Endothelial cell of umbilical vein (primary cell): ENCODE measurements at regions of chr1 and their contacts with region 1.

Region 1: DNA sequence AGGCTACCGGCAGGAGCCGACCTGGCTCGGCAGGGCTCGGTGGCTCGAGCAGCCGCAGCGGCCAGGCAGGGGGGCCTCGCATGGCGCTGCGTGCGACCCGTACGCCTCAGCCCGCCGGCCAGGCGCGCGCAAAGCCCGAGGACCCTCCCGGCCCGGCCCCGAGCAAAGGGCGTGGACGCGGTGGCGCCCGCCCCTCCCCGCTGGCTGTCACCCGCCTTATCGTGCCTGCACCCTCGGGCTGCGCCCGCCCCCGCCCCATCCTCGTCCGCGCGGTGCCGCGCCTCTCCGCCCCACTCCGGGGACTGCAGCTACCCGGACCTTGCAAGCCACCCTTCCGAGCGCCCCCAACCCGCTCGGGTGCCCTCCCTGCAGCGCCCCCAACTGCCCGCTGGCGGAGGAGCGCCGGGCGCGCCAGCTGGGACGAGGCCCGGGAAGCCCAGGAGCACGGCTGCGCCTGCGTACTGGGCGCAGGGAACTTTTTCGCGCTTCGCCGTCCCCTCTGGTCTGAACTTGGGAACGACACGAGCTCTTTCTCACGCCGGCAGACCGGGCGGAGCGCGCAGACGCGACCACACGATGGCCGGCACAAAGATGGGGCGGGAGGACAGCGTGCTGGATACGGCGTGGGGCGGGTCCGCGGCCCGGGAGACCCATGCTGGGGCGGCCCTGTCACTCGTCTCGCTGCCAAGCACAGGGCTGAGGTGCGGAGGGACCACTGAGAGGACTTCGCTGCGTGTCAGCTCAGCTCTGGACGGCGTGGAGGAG is at the start of gene ABCB10:
- DNase-seq: peak; percentile 99
- H3K4me3 ChIP-seq: peak within 1 kb of the TSS; percentile 83 to 84 (median 84)
- H3K27ac ChIP-seq: peak within 1 kb of the TSS; percentile 6
- H3K4me1 ChIP-seq: peaks cover 15% of the 10 kb centered on the region
- H3K27me3 ChIP-seq: no peaks in the 10 kb centered on the region
- CTCF ChIP-seq: peak; percentile 86 to 97
- POLR2A ChIP-seq: no peak
- total RNA-seq, gene ABCB10: 19.4 and 19.8 TPM in 2 replicates

Region 2: DNA sequence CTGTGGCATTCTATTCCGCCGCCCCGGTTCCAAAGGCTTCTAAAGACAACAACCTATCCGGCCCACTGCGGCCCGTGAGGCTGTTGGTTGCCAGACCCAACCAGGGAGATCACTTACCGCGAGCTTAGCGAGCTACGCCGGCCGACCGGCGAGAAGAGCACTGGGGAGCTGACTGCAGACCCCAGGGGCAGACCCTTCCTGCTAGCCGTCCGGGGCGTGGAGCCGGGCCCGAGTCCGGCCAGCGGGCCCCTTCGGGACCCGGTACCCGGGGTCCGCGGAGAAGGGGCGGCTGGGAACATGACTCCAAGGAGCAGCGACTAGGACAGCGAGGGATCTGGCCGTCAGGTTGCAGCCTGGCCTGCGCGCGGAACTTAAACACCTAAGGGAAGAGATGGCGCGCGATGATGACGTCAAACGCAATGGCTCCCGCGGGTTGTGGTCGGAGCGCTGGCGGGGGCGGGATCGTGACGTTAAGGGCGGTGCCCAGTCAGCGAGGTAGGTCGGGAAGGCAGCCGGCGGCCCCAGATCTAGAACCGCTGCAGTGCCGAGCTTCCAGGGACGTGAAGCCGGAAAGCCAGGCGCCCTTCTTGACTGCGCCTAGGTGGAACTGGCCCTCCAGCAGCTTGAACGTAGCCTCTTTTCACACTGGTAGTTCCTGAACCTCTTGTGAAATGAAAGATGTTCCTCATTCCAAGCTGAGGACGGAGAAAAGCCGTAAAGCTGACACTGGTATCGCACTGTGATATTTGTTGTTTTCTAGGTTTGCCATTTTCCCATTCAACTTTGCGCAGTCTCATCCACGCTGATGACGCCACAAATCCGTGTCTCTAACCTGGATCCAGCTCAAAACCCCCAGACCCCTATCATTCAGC is 50.6 kb before region 1 on chr1 and contains the start of gene NUP133:
- CTCF ChIA-PET with region 1: interaction called, 4 read pairs
- POLR2A ChIA-PET with region 1: interaction called, 7 read pairs
- dilution Hi-C with region 1: no loop called
- intact Hi-C with region 1: loop called (anchors 1 kb)
- DNase-seq: peak; percentile 99
- H3K4me3 ChIP-seq: peak within 1 kb of the TSS; percentile 61 to 93 (median 64)
- H3K27ac ChIP-seq: peak within 1 kb of the TSS; percentile 56
- H3K4me1 ChIP-seq: peaks cover 14% of the 10 kb centered on the region
- H3K27me3 ChIP-seq: no peaks in the 10 kb centered on the region
- CTCF ChIP-seq: no peak
- POLR2A ChIP-seq: peak; percentile 99
- total RNA-seq, gene NUP133: 35.9 and 43.2 TPM in 2 replicates

Region 3: GRCh38 chr1:229579059-229579673 is 20.4 kb after region 1 on chr1:
- CTCF ChIA-PET with region 1: interaction called, 17 read pairs
- POLR2A ChIA-PET with region 1: interaction called, 6 read pairs
- dilution Hi-C with region 1: no loop called
- intact Hi-C with region 1: loop called (anchors 2 kb)
- DNase-seq: peak; percentile 87
- H3K4me3 ChIP-seq: no peak overlapping the region
- H3K27ac ChIP-seq: no peak overlapping the region
- H3K4me1 ChIP-seq: peaks cover 6% of the 10 kb centered on the region
- H3K27me3 ChIP-seq: no peaks in the 10 kb centered on the region
- CTCF ChIP-seq: no peak
- POLR2A ChIP-seq: no peak

Region 4: GRCh38 chr1:229590119-229590518 is 31.4 kb after region 1 on chr1:
- CTCF ChIA-PET with region 1: no interaction called
- POLR2A ChIA-PET with region 1: no interaction called
- dilution Hi-C with region 1: no loop called
- intact Hi-C with region 1: no loop called
- DNase-seq: no peak
- H3K4me3 ChIP-seq: no peak overlapping the region
- H3K27ac ChIP-seq: no peak overlapping the region
- H3K4me1 ChIP-seq: no peaks in the 10 kb centered on the region
- H3K27me3 ChIP-seq: no peaks in the 10 kb centered on the region
- CTCF ChIP-seq: no peak
- POLR2A ChIP-seq: no peak

Region 5: DNA sequence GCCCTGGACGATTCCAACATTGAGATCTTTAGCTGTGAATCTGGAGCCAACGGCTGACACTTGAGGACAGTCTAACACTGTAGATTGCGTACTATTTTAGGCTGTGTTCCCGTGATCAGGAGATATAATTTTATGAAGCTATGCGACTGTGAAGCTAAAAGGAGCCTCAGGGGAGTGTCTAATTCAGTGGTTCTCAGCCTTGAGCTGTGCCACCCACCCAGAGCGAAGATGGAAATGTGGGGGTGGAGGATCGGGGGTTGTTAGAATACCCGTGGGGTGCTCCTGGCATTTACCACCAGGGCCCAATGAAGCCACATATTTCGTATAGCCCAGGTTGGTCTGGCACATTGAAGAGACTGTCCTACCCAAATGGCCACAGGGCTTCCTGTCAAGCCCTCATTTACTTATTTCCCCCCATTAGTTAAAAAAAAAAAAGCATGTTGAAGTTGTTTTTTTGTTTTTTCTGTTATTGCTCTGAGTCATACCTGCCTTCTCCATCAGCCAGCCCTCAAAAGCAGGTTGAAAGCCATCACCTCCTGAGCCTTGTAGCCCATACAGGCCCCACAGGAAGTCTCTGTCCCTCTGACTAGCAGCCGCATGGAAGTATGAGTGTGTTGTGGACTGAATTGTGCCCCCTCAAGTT is 650.0 kb after region 1 on chr1:
- CTCF ChIA-PET with region 1: no interaction called
- POLR2A ChIA-PET with region 1: no interaction called
- dilution Hi-C with region 1: no loop called
- intact Hi-C with region 1: loop called (anchors 5 kb)
- DNase-seq: no peak
- H3K4me3 ChIP-seq: no peak overlapping the region
- H3K27ac ChIP-seq: peak overlapping the region; percentile 83
- H3K4me1 ChIP-seq: peaks cover 38% of the 10 kb centered on the region
- H3K27me3 ChIP-seq: no peaks in the 10 kb centered on the region
- CTCF ChIP-seq: no peak
- POLR2A ChIP-seq: no peak